ENCODE measurements at regions of chr5 and their contacts with region 1.

Region 1: DNA sequence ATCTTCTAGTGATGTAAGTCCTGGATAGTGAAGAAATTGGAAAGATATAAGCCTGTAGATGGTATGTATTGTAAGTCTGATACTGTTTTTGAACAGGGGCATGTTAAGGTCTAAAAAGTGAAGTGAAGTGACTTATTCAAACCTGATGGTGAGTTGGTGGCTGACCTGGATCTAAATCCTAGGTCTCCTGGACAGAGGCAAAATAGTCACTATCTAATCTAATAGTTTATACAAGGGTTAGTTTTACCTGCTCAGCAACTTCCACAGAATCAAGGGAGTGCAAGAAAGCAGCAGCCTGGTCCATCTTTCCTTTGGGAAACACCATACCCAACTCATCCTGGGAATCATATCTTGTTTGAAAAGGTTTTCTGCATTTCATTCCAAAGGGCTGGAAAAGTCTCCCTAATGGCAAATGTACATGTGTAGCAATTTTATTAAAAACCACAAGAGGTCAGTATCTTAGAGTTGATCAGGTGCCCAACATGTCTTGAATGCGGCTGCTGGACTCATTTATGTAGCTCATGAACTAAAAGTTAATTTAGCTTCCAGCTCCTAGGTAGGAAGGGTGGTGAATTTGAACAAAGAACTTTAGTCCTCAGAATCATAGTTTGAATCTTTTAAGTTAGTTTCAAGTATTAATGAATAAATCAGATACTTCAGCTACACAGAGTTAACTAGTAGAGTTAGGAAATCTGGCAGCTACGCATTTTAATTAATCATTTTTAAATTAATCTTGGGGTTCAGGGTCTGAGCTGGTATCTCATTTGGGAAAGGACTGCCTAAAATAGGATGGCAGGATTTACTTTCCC is 26.0 kb downstream of the SKP2 start:
- DNase-seq: peak; percentile 54
- H3K4me3 ChIP-seq: no peak overlapping the region
- H3K27ac ChIP-seq: no peak overlapping the region
- H3K4me1 ChIP-seq: no peaks in the 10 kb centered on the region
- H3K27me3 ChIP-seq: no peaks in the 10 kb centered on the region
- CTCF ChIP-seq: peak; percentile 28 to 33
- POLR2A ChIP-seq: no peak

Region 2: GRCh38 chr5:35838370-35839042 is 339.4 kb before region 1 on chr5:
- CTCF ChIA-PET with region 1: no interaction called
- POLR2A ChIA-PET with region 1: no interaction called
- dilution Hi-C with region 1: no loop called
- intact Hi-C with region 1: no loop called
- DNase-seq: no peak
- H3K4me3 ChIP-seq: no peak overlapping the region
- H3K27ac ChIP-seq: no peak overlapping the region
- H3K4me1 ChIP-seq: no peaks in the 10 kb centered on the region
- H3K27me3 ChIP-seq: peaks cover 0 to 2% of the 10 kb centered on the region in 2 experiments
- CTCF ChIP-seq: no peak
- POLR2A ChIP-seq: no peak

Region 3: GRCh38 chr5:36202521-36202961 is 24.6 kb after region 1 on chr5:
- CTCF ChIA-PET with region 1: interaction called, 21 read pairs
- POLR2A ChIA-PET with region 1: no interaction called
- dilution Hi-C with region 1: no loop called
- intact Hi-C with region 1: no loop called
- DNase-seq: peak; percentile 4
- H3K4me3 ChIP-seq: no peak overlapping the region
- H3K27ac ChIP-seq: no peak overlapping the region
- H3K4me1 ChIP-seq: peaks cover 12% of the 10 kb centered on the region
- H3K27me3 ChIP-seq: no peaks in the 10 kb centered on the region
- CTCF ChIP-seq: no peak
- POLR2A ChIP-seq: no peak

Region 4: GRCh38 chr5:36305571-36306326 is 127.8 kb after region 1 on chr5:
- CTCF ChIA-PET with region 1: interaction called, 50 read pairs
- POLR2A ChIA-PET with region 1: no interaction called
- dilution Hi-C with region 1: no loop called
- intact Hi-C with region 1: loop called (anchors 1 kb)
- DNase-seq: peak; percentile 61
- H3K4me3 ChIP-seq: no peak overlapping the region
- H3K27ac ChIP-seq: no peak overlapping the region
- H3K4me1 ChIP-seq: no peaks in the 10 kb centered on the region
- H3K27me3 ChIP-seq: peaks cover 6 to 9% of the 10 kb centered on the region in 2 experiments
- CTCF ChIP-seq: peak; percentile 58 to 59
- POLR2A ChIP-seq: no peak

Region 5: GRCh38 chr5:36507332-36507952 is 329.5 kb after region 1 on chr5:
- CTCF ChIA-PET with region 1: interaction called, 7 read pairs
- POLR2A ChIA-PET with region 1: no interaction called
- dilution Hi-C with region 1: no loop called
- intact Hi-C with region 1: loop called (anchors 1 kb)
- DNase-seq: peak; percentile 53
- H3K4me3 ChIP-seq: no peak overlapping the region
- H3K27ac ChIP-seq: no peak overlapping the region
- H3K4me1 ChIP-seq: no peaks in the 10 kb centered on the region
- H3K27me3 ChIP-seq: no peaks in the 10 kb centered on the region
- CTCF ChIP-seq: peak; percentile 78 to 84
- POLR2A ChIP-seq: no peak

Region 6: GRCh38 chr5:36695677-36696673 is 518.1 kb after region 1 on chr5:
- CTCF ChIA-PET with region 1: interaction called, 20 read pairs
- POLR2A ChIA-PET with region 1: no interaction called
- dilution Hi-C with region 1: no loop called
- intact Hi-C with region 1: loop called (anchors 1 kb)
- DNase-seq: peak; percentile 51
- H3K4me3 ChIP-seq: no peak overlapping the region
- H3K27ac ChIP-seq: no peak overlapping the region
- H3K4me1 ChIP-seq: no peaks in the 10 kb centered on the region
- H3K27me3 ChIP-seq: peaks cover 3 to 10% of the 10 kb centered on the region in 2 experiments
- CTCF ChIP-seq: peak; percentile 59 to 72
- POLR2A ChIP-seq: no peak